Caco-2 (cell line): ENCODE measurements at regions of chr9 and their contacts with region 1.

Region 1: DNA sequence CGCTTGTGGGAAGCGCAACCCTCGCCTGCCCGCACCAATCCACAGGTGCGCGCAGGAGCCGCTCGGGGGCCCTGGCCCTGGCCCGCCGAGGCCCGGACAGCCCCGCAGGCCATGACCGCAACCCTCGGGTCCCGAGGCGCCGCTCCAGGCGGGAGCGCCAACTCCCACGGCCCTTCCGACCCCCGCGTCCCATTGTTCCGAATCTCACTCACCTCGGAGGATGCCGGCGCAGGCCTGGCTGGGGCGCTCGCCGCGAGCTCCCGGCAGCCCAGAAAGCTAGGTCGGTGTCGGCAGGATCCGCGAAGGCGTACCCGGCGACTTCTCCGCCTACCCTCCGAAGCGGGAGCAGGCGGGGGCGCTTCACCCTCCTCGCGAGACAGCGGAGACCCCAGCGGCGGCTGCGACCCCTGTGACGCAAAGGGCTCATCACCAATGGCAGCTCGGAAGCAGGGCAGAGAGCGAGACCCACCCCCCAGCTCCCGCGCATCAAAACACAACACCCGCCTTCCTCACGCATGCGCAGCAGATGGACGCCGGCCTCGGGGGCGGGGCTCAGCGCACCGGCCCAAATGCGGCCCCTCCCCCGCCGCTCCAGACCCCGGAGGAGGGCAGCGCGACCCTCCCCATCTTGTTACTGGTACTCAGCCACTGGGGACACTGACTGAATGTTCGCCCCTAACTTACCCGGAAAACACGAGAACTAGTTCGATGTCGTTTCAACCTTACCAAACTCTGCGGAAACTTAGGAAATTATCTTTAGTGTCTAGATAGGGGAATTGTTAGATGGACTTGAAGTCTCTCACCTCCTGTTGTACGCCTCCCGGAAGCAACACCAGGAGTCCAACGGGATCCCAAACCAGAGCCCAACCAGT is 1.3 kb upstream of the SMIM27 start:
- DNase-seq: peak; percentile 96 to 97
- H3K4me3 ChIP-seq: peak overlapping the region; percentile 87
- H3K4me3 Mint-ChIP-seq: peak overlapping the region; percentile 93
- H3K27ac Mint-ChIP-seq: peak overlapping the region; percentile 96
- H3K4me1 ChIP-seq: no peaks in the 10 kb centered on the region
- H3K4me1 Mint-ChIP-seq: peaks cover 7% of the 10 kb centered on the region
- H3K27me3 ChIP-seq: no peaks in the 10 kb centered on the region
- H3K27me3 Mint-ChIP-seq: no peaks in the 10 kb centered on the region
- CTCF ChIP-seq: no peak

Region 2: DNA sequence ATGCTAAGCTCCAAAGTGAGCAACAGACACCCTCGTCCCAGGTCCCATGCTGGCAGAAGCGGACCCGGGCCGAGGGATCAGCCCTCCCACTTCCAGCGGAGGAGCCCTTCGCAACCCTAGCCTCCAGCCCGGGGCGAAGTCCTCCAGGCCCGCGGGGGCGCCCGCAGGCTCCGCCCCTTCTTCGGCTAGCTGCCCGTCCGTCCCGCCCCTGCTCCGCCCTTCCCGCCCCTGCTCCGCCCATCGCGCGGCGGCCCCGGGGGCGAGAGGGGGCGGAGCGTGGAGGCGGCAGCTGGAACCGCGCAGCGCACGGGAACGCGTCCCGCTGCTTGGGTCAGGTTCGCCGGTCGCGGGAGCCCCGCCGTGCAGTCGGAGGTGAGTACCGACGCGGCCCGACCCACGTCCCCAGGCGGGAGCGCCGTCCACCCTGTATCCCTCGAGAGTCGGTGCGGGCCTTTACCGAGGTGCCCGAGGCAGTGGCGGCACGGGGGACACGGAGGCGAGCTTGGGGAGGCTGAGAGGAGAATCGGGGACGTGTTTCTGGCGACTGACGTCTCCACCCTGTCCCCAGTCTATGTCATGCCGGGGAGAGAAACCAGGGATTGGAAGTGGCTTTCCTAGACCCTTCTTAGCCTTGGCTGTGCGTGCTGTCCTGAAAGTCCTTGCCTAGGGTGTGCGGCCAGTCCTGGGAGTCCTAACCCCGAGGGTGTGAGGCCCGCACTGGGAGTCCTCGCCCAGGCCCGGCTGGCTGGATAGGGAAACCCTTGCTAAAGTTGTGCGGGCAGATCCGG is 166.2 kb before region 1 on chr9 and contains the start of gene ACO1:
- CTCF ChIA-PET with region 1: interaction called, 17 read pairs
- POLR2A ChIA-PET with region 1: interaction called, 7 read pairs
- intact Hi-C with region 1: loop called (anchors 1 kb)
- DNase-seq: peak; percentile 92 to 96
- H3K4me3 ChIP-seq: peak within 1 kb of the TSS; percentile 76
- H3K4me3 Mint-ChIP-seq: peak within 1 kb of the TSS; percentile 83
- H3K27ac Mint-ChIP-seq: peak within 1 kb of the TSS; percentile 51
- H3K4me1 ChIP-seq: 0 out of 2 replicates have a peak, but pooled peaks cover 4% of the 10 kb centered on the region
- H3K4me1 Mint-ChIP-seq: peaks cover 13% of the 10 kb centered on the region
- H3K27me3 ChIP-seq: no peaks in the 10 kb centered on the region
- H3K27me3 Mint-ChIP-seq: peaks cover 8% of the 10 kb centered on the region
- CTCF ChIP-seq: no peak
- total RNA-seq, gene ACO1: 51.1 and 54.7 TPM in 2 replicates